K562 (cell line): ENCODE measurements at regions of chr2 and their contacts with region 1.

Region 1: GRCh38 chr2:219475697-219476651 is 22.7 kb upstream of the GMPPA start:
- DNase-seq: peak; percentile 77 to 85 (median 83)
- ATAC-seq: peak; percentile 93
- H3K4me3 ChIP-seq: no peak overlapping the region
- H3K27ac ChIP-seq: no peak overlapping the region
- H3K4me1 ChIP-seq: peaks cover 7 to 56% of the 10 kb centered on the region in 2 experiments; a peak in 4 of 5 replicates
- H3K27me3 ChIP-seq: no peaks in the 10 kb centered on the region
- CTCF ChIP-seq: peak; percentile 81 to 92 (median 87)
- EP300 ChIP-seq: no peak
- POLR2A ChIP-seq: no peak
- RAD21 ChIP-seq: peak; percentile 85 to 86

Region 2: GRCh38 chr2:219402665-219403515 is 73.1 kb before region 1 on chr2:
- CTCF ChIA-PET with region 1: no interaction called
- POLR2A ChIA-PET with region 1: interaction called, 3 read pairs
- in situ Hi-C with region 1: no loop called
- intact Hi-C with region 1: loop called (anchors 5 kb)
- DNase-seq: peak; percentile 68 to 81 (median 72)
- ATAC-seq: peak; percentile 83
- H3K4me3 ChIP-seq: no peak overlapping the region
- H3K27ac ChIP-seq: no peak overlapping the region
- H3K4me1 ChIP-seq: peaks cover 17 to 18% of the 10 kb centered on the region in 2 experiments
- H3K27me3 ChIP-seq: no peaks in the 10 kb centered on the region
- CTCF ChIP-seq: peak; percentile 85 to 90 (median 89)
- EP300 ChIP-seq: no peak
- POLR2A ChIP-seq: no peak
- RAD21 ChIP-seq: peak; percentile 78 to 87

Region 3: GRCh38 chr2:219459460-219460311 is 16.3 kb before region 1 on chr2:
- CTCF ChIA-PET with region 1: interaction called, 3 read pairs
- POLR2A ChIA-PET with region 1: no interaction called
- in situ Hi-C with region 1: no loop called
- intact Hi-C with region 1: loop called (anchors 2 kb)
- DNase-seq: peak; percentile 71 to 83 (median 76)
- ATAC-seq: peak; percentile 92
- H3K4me3 ChIP-seq: no peak overlapping the region
- H3K27ac ChIP-seq: peak overlapping the region; percentile 23; the same call in 1 of the 3 replicates
- H3K4me1 ChIP-seq: peaks cover 20 to 31% of the 10 kb centered on the region in 2 experiments
- H3K27me3 ChIP-seq: no peaks in the 10 kb centered on the region
- CTCF ChIP-seq: peak; percentile 74 to 90 (median 81)
- EP300 ChIP-seq: no peak
- POLR2A ChIP-seq: no peak
- RAD21 ChIP-seq: peak; percentile 11 to 75; a peak in 2 of 4 replicates

Region 4: DNA sequence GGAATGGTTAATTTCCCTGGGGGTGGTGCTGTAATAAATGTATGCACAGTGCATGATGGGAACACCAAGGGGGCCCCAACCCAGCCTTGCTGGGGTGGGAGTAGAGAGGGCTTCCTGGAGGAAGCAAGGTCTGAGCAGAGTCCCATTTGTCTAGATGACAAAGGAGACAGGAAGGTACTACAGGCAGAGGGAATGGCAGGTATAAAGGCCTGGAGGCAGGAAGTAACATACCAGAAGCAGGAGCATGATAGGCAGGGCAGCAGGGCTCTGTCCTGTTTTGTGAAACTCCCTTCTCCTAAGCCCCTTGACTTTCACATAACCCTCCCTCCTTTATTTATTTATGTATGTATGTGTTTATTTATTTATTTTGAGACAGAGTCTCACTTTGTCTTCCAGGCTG is 26.6 kb after region 1 on chr2:
- CTCF ChIA-PET with region 1: no interaction called
- POLR2A ChIA-PET with region 1: no interaction called
- in situ Hi-C with region 1: no loop called
- intact Hi-C with region 1: no loop called
- DNase-seq: no peak
- ATAC-seq: no peak
- H3K4me3 ChIP-seq: no peak overlapping the region
- H3K27ac ChIP-seq: peak overlapping the region; percentile 53; the same call in 2 of the 3 replicates
- H3K4me1 ChIP-seq: peaks cover 36 to 63% of the 10 kb centered on the region in 2 experiments
- H3K27me3 ChIP-seq: no peaks in the 10 kb centered on the region
- CTCF ChIP-seq: no peak
- EP300 ChIP-seq: no peak
- POLR2A ChIP-seq: no peak
- RAD21 ChIP-seq: no peak

Region 5: GRCh38 chr2:219521066-219521880 is 45.3 kb after region 1 on chr2:
- CTCF ChIA-PET with region 1: no interaction called
- POLR2A ChIA-PET with region 1: interaction called, 4 read pairs
- in situ Hi-C with region 1: loop called (anchors 10 kb)
- intact Hi-C with region 1: loop called (anchors 1 kb)
- DNase-seq: peak; percentile 70 to 93 (median 84)
- ATAC-seq: peak; percentile 74
- H3K4me3 ChIP-seq: no peak overlapping the region; the same call in 1 of the 2 replicates
- H3K27ac ChIP-seq: peak overlapping the region; percentile 89
- H3K4me1 ChIP-seq: peaks cover 73 to 88% of the 10 kb centered on the region in 2 experiments
- H3K27me3 ChIP-seq: no peaks in the 10 kb centered on the region
- CTCF ChIP-seq: peak; percentile 76 to 88 (median 79)
- EP300 ChIP-seq: peak; percentile 87
- POLR2A ChIP-seq: no peak; the same call in 1 of the 2 replicates
- RAD21 ChIP-seq: peak; percentile 67 to 73

Region 6: DNA sequence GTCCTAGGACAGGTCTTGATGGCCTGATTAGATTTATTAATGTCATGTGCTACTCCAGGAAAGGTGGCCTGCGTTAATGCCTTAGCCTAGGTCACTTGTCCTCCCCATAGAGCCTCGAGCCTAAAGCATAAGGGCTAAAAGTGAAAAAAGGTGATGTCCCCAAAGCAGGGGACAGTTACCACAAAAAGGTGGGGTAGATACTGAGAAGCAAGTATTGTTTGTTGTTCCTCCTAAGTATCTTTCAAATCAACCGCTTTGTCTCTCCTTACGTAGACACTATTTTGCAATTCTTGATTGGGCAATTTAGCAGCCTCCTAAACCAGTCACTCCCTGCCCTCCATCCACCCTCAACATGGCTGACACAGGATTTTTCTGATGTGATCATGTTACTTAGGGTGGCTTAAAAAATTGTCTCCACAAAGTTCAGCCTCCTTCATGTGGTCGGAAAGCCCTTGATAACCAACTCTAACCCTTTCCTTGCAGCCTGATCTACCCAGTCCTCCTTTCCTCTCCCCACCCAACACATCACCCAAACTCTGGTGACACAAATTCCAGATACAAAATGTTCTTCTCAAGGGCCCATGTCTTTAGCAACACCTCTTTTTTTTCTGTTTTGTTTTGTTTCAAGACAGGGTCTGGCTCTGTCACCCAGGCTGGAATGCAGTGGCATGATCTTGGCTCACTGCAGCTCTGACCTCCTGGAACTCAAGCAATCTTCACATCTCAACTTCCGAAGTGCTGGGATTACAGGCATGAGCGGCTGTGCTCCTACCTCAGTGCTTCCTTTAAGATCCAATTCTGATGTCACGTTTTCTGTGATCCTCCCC is 103.0 kb after region 1 on chr2:
- CTCF ChIA-PET with region 1: no interaction called
- POLR2A ChIA-PET with region 1: no interaction called
- in situ Hi-C with region 1: no loop called
- intact Hi-C with region 1: no loop called
- DNase-seq: no peak
- ATAC-seq: no peak
- H3K4me3 ChIP-seq: no peak overlapping the region
- H3K27ac ChIP-seq: no peak overlapping the region
- H3K4me1 ChIP-seq: peaks cover 25 to 31% of the 10 kb centered on the region in 2 experiments; a peak in 4 of 5 replicates
- H3K27me3 ChIP-seq: no peaks in the 10 kb centered on the region
- CTCF ChIP-seq: no peak
- EP300 ChIP-seq: no peak
- POLR2A ChIP-seq: no peak
- RAD21 ChIP-seq: no peak